RWPE1 (cell line): ENCODE measurements at regions of chr10 and their contacts with region 1.

Region 1: DNA sequence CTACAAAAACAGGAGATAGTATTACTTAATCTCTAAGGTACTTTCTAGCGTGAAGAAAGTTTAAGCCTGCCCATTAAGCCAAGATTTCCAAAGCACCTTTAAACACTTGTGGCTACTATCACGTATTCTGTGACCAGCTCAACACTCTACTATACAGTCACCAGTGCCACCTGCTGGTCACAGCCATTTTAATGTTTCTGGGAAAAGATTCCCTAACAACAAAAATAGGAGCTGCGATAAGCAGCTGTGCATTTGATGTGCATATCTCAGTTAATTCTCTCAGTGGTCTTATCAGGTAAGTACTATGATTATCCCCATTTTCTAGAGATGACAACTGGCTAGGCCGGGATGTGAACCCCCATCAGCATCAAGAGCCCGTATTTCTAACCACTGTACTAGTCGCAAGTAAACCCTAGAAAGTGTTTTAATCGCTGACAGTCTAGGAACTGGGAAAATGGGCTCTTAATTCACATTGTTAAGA is 860 bp downstream of the SEC31B start:
- DNase-seq: peak; percentile 58
- H3K27ac ChIP-seq: no peak overlapping the region
- CTCF ChIP-seq: peak; percentile 78

Region 2: DNA sequence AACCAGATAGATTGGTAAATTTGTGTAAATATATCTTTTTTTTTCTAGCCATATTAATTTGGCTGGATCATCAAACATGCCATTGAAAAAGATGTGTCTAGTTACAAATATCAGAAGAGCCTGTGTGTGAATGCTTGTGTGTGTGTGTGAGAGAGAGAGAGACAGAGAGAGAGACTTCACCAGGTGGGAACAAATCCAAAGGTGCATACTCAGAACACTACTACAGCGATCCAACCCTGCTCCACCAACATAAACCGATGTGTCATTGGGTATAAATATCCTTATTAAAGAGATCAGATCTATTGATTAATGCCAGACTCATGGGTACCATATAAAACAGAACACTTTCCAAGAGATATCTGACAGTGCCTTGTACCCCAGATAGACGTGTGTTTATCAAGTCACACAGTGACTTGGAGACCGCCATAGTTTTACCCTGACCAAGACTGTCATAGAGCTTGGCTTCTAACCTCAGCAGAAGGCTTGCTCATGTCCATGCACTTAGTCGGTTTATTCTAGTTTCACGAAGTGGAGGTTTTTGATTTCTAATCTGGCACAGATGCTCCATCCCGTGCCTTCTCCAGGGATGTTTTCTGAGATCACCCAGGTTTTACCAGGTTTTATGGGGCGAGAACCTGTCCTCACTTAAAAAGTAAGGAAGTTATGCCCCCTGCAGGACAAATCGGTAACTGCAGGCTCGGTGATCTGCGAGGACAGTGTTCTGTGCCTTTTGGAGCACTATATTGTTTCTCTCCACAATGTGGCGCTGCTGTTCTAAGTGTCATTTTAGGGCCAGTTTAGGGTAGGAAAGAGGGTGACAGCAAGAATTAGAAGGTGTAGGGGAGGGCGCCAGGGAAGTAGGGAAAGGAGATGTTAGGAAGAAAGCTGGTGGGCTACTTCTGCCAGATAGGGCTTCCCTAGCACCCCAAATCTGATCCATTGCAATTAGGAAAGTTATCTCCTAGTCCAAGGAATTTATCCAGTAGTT is 85.3 kb before region 1 on chr10:
- CTCF ChIA-PET with region 1: interaction called, 32 read pairs
- POLR2A ChIA-PET with region 1: no interaction called
- DNase-seq: peak; percentile 88
- H3K27ac ChIP-seq: no peak overlapping the region
- CTCF ChIP-seq: peak; percentile 98

Region 3: GRCh38 chr10:100448951-100449350 is 69.8 kb before region 1 on chr10:
- CTCF ChIA-PET with region 1: interaction called, 13 read pairs
- POLR2A ChIA-PET with region 1: no interaction called
- DNase-seq: no peak
- H3K27ac ChIP-seq: no peak overlapping the region
- CTCF ChIP-seq: no peak

Region 4: DNA sequence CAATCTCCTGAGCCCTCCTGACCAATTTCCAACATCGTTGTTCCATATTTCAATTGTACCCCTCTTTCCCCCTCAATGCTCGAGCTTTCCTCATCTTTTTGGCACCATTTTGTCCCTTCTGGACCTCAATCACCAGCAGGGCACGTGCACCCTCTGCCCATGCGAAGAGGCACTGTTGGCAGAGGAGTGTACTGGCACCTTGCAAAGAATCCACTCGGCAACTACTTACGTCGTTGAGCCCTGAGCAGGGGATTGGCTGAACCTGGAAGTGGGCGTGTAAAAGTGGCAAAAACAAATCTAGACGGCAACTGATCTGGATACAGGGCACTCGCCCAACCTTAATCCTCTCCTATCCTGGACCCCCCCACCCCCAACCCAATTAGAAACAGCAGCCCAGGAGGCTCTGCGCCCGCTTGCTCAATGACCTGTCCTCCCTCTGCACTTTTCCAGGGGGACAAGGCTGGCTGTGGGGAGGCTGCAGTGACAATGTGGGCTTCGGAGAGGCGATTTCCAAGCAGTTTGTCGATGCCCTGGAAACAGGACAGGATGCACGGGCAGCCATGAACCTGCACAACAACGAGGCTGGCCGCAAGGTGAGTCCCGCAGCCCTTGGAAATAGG is 37.2 kb before region 1 on chr10:
- CTCF ChIA-PET with region 1: interaction called, 18 read pairs
- POLR2A ChIA-PET with region 1: no interaction called
- DNase-seq: peak; percentile 97
- H3K27ac ChIP-seq: no peak overlapping the region
- CTCF ChIP-seq: no peak

Region 5: GRCh38 chr10:100496567-100496966 is 22.2 kb before region 1 on chr10:
- CTCF ChIA-PET with region 1: interaction called, 16 read pairs
- POLR2A ChIA-PET with region 1: no interaction called
- DNase-seq: no peak
- H3K27ac ChIP-seq: no peak overlapping the region
- CTCF ChIP-seq: no peak

Region 6: DNA sequence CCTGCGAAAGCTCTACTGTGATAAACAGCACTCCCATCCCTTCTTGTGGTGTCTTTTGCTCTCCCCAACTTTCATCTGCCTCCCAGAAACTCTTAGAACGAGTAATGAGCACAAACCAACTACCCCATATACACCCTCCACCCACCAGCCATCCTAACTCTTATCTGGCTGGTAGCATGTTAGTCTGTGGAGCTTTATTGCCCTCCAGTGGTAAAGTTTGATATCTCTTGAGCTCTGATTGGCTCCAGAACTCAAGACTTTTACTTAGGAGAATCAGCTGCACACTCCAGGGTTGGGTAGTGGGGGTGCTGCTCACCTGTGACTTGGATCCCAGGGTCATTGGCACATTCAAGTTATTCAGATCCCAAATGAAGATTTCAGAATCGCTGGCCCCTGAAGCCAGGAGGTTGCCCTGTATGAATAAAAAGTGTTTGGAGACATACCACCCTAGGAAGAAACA is 10.1 kb before region 1 on chr10:
- CTCF ChIA-PET with region 1: interaction called, 25 read pairs
- POLR2A ChIA-PET with region 1: no interaction called
- DNase-seq: peak; percentile 67
- H3K27ac ChIP-seq: no peak overlapping the region
- CTCF ChIP-seq: peak; percentile 62

Region 7: GRCh38 chr10:100535715-100536353 is 17.0 kb after region 1 on chr10 and contains the start of gene HIF1AN:
- CTCF ChIA-PET with region 1: interaction called, 10 read pairs
- POLR2A ChIA-PET with region 1: interaction called, 3 read pairs
- DNase-seq: peak; percentile 97
- H3K27ac ChIP-seq: peak within 1 kb of the TSS; percentile 70
- CTCF ChIP-seq: peak; percentile 96